Activated CD4-positive, alpha-beta T cell treated with anti-CD3 and anti-CD28 coated beads, Interleukin-2, amount 10 ng/mL, durations not matched to agents 24 days and 14 days (primary cell): ENCODE measurements at regions of chr12 and their contacts with region 1.

Region 1: DNA sequence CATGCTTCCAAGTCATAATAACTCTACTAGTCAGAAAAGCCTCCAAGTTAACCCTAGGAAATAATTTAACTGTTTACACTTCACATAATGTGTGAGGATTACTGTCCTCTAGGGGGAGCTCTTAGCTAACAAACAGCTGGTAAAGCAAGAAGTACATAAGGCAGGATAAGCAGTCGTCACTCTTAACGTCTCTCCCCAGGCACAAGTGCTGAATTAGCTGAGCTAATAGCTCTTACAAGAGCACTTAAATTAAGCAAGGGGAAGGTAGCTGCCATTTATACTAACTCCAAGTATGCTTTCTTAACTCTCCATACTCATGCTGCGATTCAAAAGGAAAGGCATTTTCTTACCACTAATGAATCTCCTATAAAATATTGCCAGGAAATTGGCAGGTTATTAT is 79.3 kb upstream of the TSPAN11 start:
- DNase-seq: peak; percentile 86
- H3K4me3 Mint-ChIP-seq: no peak overlapping the region
- H3K27ac Mint-ChIP-seq: no peak overlapping the region
- H3K4me1 Mint-ChIP-seq: peaks cover 13% of the 10 kb centered on the region
- H3K27me3 Mint-ChIP-seq: peaks cover 4% of the 10 kb centered on the region

Region 2: GRCh38 chr12:29380536-29381523 is 1466.4 kb before region 1 on chr12 and contains the start of gene ERGIC2:
- intact Hi-C with region 1: loop called (anchors 2 kb)
- DNase-seq: peak; percentile 97
- H3K4me3 Mint-ChIP-seq: peak within 1 kb of the TSS; percentile 96
- H3K27ac Mint-ChIP-seq: peak within 1 kb of the TSS; percentile 98
- H3K4me1 Mint-ChIP-seq: peaks cover 38% of the 10 kb centered on the region
- H3K27me3 Mint-ChIP-seq: no peaks in the 10 kb centered on the region
- total RNA-seq, gene ERGIC2: 95.6 and 101 TPM in 2 replicates

Region 3: GRCh38 chr12:29552324-29552927 is 1294.8 kb before region 1 on chr12:
- intact Hi-C with region 1: loop called (anchors 1 kb)
- DNase-seq: peak; percentile 86
- H3K4me3 Mint-ChIP-seq: no peak overlapping the region
- H3K27ac Mint-ChIP-seq: no peak overlapping the region
- H3K4me1 Mint-ChIP-seq: no peaks in the 10 kb centered on the region
- H3K27me3 Mint-ChIP-seq: peaks cover 5% of the 10 kb centered on the region

Region 4: GRCh38 chr12:30896461-30896860 is 49.2 kb after region 1 on chr12:
- intact Hi-C with region 1: no loop called
- DNase-seq: no peak
- H3K4me3 Mint-ChIP-seq: no peak overlapping the region
- H3K27ac Mint-ChIP-seq: no peak overlapping the region
- H3K4me1 Mint-ChIP-seq: no peaks in the 10 kb centered on the region
- H3K27me3 Mint-ChIP-seq: peaks cover 2% of the 10 kb centered on the region

Region 5: DNA sequence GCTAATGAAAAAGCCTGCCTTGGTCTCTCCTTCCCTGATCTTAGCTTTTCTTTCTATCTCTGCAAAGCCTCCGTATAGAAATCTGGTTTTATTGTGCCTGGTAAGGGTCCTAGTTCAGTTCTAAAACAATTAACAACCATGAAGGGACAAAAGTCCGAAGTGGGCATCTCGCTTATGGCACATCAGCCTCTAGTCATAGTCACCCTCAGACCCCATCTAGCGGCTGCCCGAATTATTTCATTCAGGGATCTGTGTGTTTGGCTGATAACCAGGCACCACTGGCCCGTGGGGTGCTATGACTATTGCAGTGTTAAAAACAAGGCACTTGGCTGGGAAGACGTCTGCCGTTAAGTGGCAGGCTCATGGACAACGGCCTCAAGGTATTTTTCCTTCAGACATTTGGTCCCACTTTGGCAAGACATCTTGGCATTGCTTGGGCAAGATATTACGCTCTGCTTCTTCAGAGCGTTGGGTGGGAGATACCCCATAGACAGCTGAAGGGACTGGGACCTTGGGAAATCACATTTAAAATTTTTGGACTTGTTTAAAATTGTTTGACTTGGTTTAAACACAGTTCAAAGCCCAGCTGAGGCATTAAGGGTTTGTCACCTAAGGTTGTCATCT is 391.6 kb after region 1 on chr12:
- intact Hi-C with region 1: loop called (anchors 1 kb)
- DNase-seq: peak; percentile 86
- H3K4me3 Mint-ChIP-seq: no peak overlapping the region
- H3K27ac Mint-ChIP-seq: no peak overlapping the region
- H3K4me1 Mint-ChIP-seq: no peaks in the 10 kb centered on the region
- H3K27me3 Mint-ChIP-seq: peaks cover 7% of the 10 kb centered on the region

Region 6: DNA sequence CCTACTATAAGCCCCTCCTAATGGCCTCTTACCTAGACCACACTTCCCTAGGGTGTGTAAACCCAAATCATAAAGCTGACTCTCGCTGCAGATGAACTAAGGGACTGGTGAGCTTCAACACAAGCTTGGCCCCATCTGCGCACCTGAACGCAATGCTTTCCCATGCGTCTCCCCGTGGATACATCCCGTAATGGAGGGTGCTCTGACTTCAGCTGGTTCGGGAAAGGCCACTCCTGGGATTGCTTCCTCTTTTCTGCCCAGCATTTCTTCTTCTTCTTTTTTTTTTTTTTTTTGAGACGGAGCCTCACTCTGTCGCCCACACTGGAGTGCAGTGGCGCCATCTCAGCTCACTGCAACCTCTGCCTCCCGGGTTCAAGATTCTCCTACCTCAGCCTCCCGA is 784.5 kb after region 1 on chr12:
- intact Hi-C with region 1: loop called (anchors 5 kb)
- DNase-seq: no peak
- H3K4me3 Mint-ChIP-seq: no peak overlapping the region
- H3K27ac Mint-ChIP-seq: no peak overlapping the region
- H3K4me1 Mint-ChIP-seq: peaks cover 6% of the 10 kb centered on the region
- H3K27me3 Mint-ChIP-seq: no peaks in the 10 kb centered on the region